ENCODE measurements at regions of chr3 and their contacts with region 1.

Region 1: DNA sequence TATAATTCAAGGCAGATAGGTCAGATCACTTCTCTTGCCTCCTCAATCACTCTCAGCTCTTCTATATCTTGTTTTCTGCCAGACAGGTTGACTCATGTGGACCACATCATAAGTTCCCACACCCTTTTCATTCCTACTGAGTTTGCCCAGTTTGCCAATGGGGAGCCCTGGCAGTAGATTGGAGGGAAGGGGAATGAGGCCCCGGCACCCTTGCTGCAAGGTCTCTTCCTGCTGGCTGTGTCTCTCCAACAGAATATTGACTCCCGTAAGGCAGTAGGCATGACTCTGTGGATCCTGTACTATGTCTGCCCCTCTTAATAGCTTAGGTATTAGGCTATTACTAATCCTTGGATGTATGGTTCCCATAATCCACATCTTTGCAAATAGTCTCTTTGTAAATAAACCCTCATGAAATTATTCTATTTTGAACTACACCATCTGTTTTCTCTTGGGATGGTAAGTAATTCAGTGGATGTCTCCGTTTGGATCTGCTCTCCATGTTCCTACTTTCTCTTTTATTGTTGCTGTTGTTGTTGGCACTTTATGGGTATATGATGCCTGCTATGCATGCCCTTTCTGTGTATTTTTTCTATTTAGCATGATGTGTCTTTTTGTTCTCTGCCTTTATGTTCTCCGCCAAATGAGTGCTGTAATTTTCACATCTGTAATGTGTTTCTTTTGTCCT is 65.5 kb upstream of the DCBLD2 start:
- DNase-seq: no peak
- H3K4me3 ChIP-seq: no peak overlapping the region
- H3K27ac ChIP-seq: no peak overlapping the region
- H3K4me1 ChIP-seq: peaks cover 5% of the 10 kb centered on the region
- H3K27me3 ChIP-seq: no peaks in the 10 kb centered on the region
- CTCF ChIP-seq: no peak

Region 2: DNA sequence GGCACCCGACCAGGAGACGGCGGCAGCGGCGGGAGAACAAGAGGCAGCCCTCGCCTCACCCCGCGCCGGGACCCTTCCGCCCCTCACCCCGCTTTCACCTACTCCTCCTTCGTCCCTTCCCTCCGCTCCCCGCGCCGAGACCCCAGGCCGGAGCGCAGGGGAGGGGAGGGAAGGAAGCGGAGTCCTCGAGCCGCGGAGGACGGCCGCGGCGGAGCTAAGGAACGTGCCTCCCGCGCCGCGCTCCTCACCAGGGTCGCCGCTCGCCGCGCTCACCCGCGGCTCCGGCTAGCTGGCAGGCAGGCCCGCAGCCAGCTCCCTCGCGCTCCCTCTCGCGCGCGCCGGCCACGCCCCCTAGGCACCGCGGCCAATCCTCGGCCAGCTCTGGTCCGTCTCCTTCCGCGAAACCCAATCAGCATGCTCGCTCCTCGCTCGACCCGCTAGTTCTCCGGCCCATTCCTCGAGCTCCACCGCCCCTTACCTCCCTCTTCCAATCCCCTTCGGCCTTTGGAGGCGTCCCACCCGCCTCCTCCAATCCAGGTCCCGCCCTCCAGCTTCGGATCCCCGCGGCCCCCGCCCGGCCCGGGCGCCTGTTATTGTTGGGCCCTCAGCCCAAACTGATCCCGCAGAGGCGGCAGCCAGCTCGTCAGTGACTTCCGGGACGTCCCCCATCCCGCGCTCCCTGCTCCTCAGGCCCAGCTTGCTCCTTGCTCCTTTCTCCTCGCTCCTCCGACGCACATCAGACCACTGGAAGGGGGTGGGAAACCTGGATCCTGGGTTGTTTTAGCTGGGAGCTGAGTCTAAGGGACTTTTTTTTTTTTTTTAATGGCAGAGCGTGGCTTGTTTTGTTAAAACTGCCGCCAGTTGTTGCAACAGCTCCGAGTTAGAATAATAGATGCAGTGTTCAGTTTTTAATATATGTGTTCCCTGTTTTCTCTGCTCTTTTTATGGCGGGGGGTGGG is 65.3 kb before region 1 on chr3 and contains the start of gene DCBLD2:
- CTCF ChIA-PET with region 1: no interaction called
- POLR2A ChIA-PET with region 1: no interaction called
- intact Hi-C with region 1: loop called (anchors 5 kb)
- DNase-seq: peak; percentile 100
- H3K4me3 ChIP-seq: peak within 1 kb of the TSS; percentile 72
- H3K27ac ChIP-seq: peak within 1 kb of the TSS; percentile 85
- H3K4me1 ChIP-seq: peaks cover 7% of the 10 kb centered on the region
- H3K27me3 ChIP-seq: no peaks in the 10 kb centered on the region
- CTCF ChIP-seq: no peak
- total RNA-seq, gene DCBLD2: 29.9 and 33.6 TPM in 2 replicates

Region 3: GRCh38 chr3:99145031-99145430 is 178.0 kb after region 1 on chr3:
- CTCF ChIA-PET with region 1: no interaction called
- POLR2A ChIA-PET with region 1: no interaction called
- intact Hi-C with region 1: no loop called
- DNase-seq: no peak
- H3K4me3 ChIP-seq: no peak overlapping the region
- H3K27ac ChIP-seq: no peak overlapping the region
- H3K4me1 ChIP-seq: no peaks in the 10 kb centered on the region
- H3K27me3 ChIP-seq: no peaks in the 10 kb centered on the region
- CTCF ChIP-seq: no peak

Measured in A673 (cell line).